ENCODE measurements at regions of chr17 and their contacts with region 1.

Region 1: DNA sequence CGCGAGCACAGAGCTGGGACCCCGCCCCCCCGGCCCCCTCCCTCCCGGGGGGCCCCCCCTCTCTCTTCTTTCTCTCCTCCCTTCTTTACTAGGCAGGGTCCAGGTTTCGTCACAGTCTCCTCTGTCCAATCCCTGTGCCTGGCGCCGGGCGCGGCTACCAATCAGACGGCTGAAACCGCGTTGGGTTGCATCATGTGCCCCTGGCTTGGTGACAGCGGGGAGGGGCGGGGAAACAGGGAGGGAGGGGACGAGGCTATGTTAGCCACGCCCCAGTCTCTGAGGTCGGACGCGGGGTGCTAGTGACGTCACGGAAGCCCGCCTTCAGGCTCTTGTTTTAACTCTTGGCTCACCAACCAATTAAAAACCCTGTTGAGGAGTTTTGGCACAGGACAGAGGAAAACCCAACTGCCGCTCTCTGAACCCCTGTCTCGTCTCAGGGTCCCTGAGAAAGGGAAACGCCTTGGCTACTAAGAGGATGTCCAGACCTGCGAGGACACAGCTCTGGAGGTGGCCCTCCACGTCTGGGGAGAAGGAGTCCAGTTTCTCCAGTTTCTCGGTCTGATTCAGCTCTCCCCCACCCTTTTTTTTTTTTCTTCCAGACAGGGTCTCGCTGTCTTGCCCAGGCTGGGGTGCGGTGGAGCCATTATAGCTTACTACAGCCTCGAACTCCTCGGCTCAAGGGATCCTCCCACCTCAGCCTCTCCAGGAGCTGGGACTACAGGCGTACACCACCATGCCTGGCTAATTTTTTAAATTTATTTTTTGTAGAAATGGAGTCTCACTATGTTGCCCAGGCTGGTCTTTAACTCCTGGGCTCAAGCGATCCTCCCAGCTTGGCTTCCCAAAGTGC is 439 bp upstream of the PLEKHH3 start:
- DNase-seq: peak; percentile 86
- ATAC-seq: peak; percentile 74
- H3K4me3 Mint-ChIP-seq: peak overlapping the region; percentile 87
- H3K27ac Mint-ChIP-seq: peak overlapping the region; percentile 78
- H3K4me1 Mint-ChIP-seq: peaks cover 65% of the 10 kb centered on the region
- H3K27me3 Mint-ChIP-seq: peaks cover 12% of the 10 kb centered on the region
- CTCF ChIP-seq: no peak

Region 2: DNA sequence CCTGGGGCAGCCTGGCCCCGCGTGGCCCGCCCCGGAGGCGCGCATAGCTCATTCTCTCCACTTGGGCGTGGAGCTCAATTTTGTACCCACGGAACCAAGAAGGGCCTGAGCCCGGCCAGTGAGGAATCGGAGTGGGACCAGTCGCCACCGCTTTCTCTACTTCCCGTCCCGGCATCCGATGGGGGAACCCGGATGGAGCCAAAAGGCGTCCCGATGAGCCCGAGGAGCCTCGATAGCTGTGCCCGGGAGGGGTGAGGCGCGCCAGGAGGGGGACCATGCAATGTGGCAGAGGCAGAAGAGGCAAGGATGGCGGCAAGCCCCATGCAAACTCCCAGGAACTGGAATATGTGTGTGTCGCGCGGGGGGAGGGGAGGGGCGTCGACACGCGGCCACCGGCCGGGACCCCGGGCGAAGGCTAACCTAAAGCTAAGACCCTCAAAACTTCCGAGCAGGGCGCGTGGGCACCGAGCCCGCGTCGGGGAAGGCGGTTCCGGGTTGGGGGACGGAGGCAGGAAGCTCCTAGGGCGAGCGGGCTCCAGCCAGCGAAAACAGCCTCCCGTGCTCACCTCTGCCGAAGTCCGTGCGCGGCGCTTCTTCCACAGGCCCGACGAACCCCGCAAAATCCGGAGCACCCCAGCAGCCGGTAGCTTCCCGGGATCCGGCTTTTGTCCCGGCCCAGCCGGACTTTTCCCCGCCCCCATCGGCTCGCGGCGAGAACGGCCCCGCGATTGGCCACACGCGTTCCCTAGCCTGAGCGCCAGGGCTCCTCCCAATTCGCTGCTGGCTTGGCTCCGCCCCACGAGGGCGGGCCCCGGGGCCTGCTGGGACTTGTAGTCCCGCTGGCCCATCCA is 758.7 kb before region 1 on chr17 and contains the start of gene ACLY:
- CTCF ChIA-PET with region 1: no interaction called
- POLR2A ChIA-PET with region 1: no interaction called
- intact Hi-C with region 1: loop called (anchors 2 kb)
- DNase-seq: peak; percentile 96
- ATAC-seq: peak; percentile 99
- H3K4me3 Mint-ChIP-seq: peak within 1 kb of the TSS; percentile 92
- H3K27ac Mint-ChIP-seq: peak within 1 kb of the TSS; percentile 84
- H3K4me1 Mint-ChIP-seq: peaks cover 31% of the 10 kb centered on the region
- H3K27me3 Mint-ChIP-seq: no peaks in the 10 kb centered on the region
- CTCF ChIP-seq: no peak
- total RNA-seq, gene ACLY: 133 and 143 TPM in 2 replicates

Region 3: DNA sequence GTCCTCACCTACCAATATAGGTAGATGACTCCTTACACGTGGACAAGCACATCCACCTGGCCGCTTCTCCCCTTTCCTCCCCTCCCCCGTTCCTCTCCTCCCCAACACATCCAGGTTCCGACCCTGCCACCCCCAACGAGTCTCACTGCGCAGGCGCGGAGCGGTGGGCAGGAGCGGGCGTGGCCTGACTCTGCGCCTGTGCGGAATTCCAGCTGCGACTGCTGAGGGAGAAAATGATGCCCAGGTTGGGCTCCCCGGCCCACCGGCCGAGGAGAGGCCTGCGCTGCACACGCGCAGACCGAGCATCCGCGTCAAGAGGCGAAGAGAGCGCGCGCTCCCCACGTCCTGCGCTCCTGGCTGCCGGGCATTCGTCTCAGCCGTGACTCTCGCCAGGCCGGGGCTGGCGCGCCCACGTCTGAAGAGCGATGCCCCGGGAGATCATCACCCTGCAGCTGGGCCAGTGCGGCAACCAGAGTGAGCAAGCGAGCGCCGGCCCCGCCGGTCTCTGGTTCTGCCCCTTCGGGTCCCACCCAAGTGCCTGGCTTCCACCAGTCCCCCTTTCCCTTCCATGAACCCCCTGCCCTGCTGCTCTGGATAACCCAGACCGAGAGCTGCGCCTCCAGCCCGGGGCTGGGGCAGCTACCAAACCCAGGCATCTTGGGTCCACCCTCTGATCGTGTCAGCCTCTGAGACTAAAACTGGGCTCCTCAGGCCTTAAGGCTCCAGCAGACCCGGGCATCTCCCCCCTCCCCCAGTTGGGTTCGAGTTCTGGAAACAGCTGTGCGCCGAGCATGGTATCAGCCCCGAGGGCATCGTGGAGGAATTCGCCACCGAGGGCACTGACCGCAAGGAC is 17.9 kb before region 1 on chr17 and contains the start of gene TUBG2:
- CTCF ChIA-PET with region 1: interaction called, 5 read pairs
- POLR2A ChIA-PET with region 1: interaction called, 3 read pairs
- intact Hi-C with region 1: loop called (anchors 2 kb)
- DNase-seq: peak; percentile 68
- ATAC-seq: peak; percentile 84
- H3K4me3 Mint-ChIP-seq: peak within 1 kb of the TSS; percentile 90
- H3K27ac Mint-ChIP-seq: peak within 1 kb of the TSS; percentile 74
- H3K4me1 Mint-ChIP-seq: peaks cover 32% of the 10 kb centered on the region
- H3K27me3 Mint-ChIP-seq: peaks cover 8% of the 10 kb centered on the region
- CTCF ChIP-seq: no peak
- total RNA-seq, gene TUBG2: 8.6 and 9.4 TPM in 2 replicates

Region 4: DNA sequence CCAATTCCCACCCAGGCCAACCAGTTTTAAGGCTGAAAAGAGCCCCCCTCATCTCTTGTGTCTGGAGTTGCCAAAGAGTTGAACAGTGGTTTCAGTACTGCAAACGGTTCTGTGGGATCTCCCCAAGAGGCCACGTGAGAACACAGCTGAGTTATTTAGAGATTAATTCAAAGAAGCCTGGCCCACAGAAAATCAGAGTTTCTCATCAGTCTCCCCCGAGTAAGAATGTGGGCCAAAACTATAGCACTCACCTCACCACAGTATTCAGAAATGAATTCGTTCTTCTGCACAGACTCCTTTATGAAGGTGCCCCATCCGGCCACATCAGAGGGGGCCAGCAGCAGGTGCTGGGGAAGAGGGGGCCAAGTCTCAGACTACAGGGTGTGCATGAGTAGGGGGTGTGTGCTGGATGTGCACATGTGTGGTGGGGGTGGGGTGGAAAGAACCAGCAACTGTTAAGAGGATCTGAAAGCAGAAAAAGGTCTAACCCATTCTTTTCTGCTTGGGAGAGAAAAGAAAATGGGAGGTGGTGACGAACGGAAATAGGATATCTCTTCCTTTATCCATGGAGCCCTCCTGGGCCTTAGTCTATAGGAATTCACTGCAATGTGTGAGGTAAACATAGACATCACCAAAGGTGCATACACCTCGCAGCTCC is 27.7 kb after region 1 on chr17:
- CTCF ChIA-PET with region 1: interaction called, 8 read pairs
- POLR2A ChIA-PET with region 1: interaction called, 22 read pairs
- intact Hi-C with region 1: loop called (anchors 1 kb)
- DNase-seq: no peak
- ATAC-seq: peak; percentile 78
- H3K4me3 Mint-ChIP-seq: peak overlapping the region; percentile 74
- H3K27ac Mint-ChIP-seq: peak overlapping the region; percentile 94
- H3K4me1 Mint-ChIP-seq: peaks cover 61% of the 10 kb centered on the region
- H3K27me3 Mint-ChIP-seq: no peaks in the 10 kb centered on the region
- CTCF ChIP-seq: no peak

Region 5: GRCh38 chr17:42720996-42721583 is 43.9 kb after region 1 on chr17:
- CTCF ChIA-PET with region 1: interaction called, 3 read pairs
- POLR2A ChIA-PET with region 1: no interaction called
- intact Hi-C with region 1: loop called (anchors 5 kb)
- DNase-seq: no peak
- ATAC-seq: peak; percentile 73
- H3K4me3 Mint-ChIP-seq: no peak overlapping the region
- H3K27ac Mint-ChIP-seq: peak overlapping the region; percentile 20
- H3K4me1 Mint-ChIP-seq: peaks cover 2% of the 10 kb centered on the region
- H3K27me3 Mint-ChIP-seq: no peaks in the 10 kb centered on the region
- CTCF ChIP-seq: no peak

Region 6: DNA sequence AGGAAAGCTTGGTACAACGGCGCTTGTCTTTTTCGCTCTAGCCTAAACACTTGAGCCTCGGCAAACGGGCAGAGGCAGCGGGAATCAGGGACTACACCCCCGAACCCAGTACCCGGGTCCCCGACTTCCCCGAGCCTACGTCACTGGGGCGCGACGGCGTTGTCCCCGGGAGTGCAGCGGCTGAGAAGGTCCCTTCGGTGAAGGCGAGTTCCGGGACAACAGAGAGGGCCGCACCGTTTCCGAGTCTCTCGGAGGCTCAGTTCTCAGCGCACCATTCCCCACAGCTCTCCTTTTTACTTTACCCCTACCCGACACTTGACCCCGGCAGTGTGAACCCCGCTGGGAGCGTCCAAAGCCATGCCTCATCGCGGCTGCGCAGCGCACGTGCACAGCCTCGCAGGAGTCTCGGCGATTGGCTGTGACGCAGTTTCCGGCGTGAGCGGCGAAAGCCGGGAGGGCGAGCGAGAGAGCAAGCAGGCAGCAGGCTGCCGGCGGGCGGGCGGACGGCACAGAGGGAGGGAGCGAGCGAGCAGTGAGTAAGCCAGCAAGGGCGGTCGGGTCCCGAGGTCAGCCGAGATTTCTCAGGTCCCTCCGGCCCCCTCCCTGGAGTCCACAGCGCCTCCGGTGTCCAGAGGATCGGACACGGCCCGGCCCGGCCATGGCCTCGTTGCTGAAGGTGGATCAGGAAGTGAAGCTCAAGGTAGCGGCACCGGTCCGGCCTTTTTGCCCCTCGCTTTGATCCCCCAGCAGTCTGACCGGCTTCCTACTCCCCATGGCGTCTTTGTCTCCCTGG is 155.9 kb after region 1 on chr17 and contains the start of gene PSME3:
- CTCF ChIA-PET with region 1: no interaction called
- POLR2A ChIA-PET with region 1: interaction called, 4 read pairs
- intact Hi-C with region 1: loop called (anchors 1 kb)
- DNase-seq: peak; percentile 84
- ATAC-seq: peak; percentile 91
- H3K4me3 Mint-ChIP-seq: peak within 1 kb of the TSS; percentile 97
- H3K27ac Mint-ChIP-seq: peak within 1 kb of the TSS; percentile 99
- H3K4me1 Mint-ChIP-seq: peaks cover 24% of the 10 kb centered on the region
- H3K27me3 Mint-ChIP-seq: no peaks in the 10 kb centered on the region
- CTCF ChIP-seq: no peak
- total RNA-seq, gene PSME3: 136 and 141 TPM in 2 replicates

Region 7: DNA sequence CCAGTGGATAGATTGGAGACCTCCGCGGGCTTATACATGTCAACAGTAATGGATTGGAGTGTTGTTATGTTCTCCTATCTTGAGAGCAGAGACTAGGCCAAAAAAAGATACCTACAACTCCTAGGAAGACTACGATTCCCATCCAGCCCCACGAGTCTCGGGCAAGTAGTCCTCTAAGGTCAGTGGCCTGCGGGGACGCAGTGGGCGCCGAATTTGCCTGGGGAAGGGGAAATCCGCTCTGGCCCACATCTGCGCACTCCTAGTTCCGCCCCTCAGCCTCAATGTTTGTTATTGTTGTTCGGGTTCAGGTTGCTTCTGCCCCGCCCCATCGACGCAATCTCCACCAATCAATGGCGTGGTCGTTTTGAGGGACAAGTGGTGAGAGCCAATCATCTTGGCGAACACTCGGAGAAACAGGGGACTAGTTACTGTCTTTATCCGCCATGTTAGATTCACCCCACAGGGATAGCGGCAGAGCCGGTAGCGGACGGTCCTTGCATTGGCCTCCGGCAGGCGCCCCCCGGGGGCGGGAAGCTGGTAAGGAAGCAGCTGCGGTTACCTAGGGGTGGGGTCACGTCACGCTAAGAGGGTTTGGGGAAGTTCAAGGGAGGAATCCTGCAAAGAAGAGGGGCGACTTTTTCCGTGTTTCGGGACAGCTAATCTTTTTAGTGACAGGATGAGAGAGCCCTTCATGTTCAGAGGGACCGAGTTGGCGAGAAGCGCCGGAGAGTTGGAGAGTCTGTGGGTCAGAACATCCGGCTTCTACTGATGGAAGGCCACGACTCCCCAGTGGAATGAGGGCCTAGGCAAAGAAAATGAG is 493.7 kb after region 1 on chr17 and contains the start of gene NBR1:
- CTCF ChIA-PET with region 1: no interaction called
- POLR2A ChIA-PET with region 1: no interaction called
- intact Hi-C with region 1: loop called (anchors 2 kb)
- DNase-seq: peak; percentile 86
- ATAC-seq: peak; percentile 74
- H3K4me3 Mint-ChIP-seq: no peak within 1 kb of the TSS
- H3K27ac Mint-ChIP-seq: no peak within 1 kb of the TSS
- H3K4me1 Mint-ChIP-seq: peaks cover 13% of the 10 kb centered on the region
- H3K27me3 Mint-ChIP-seq: no peaks in the 10 kb centered on the region
- CTCF ChIP-seq: no peak
- total RNA-seq, gene NBR1: 42.2 and 44.8 TPM in 2 replicates